PC-3 (cell line): ENCODE measurements at regions of chr18 and their contacts with region 1.

Region 1: GRCh38 chr18:45026162-45026561 is 345.5 kb downstream of the SETBP1 start:
- DNase-seq: no peak
- ATAC-seq: no peak
- H3K4me3 ChIP-seq: no peak overlapping the region
- H3K27ac ChIP-seq: no peak overlapping the region
- H3K4me1 ChIP-seq: no peaks in the 10 kb centered on the region
- H3K27me3 ChIP-seq: no peaks in the 10 kb centered on the region
- CTCF ChIP-seq: no peak

Region 2: DNA sequence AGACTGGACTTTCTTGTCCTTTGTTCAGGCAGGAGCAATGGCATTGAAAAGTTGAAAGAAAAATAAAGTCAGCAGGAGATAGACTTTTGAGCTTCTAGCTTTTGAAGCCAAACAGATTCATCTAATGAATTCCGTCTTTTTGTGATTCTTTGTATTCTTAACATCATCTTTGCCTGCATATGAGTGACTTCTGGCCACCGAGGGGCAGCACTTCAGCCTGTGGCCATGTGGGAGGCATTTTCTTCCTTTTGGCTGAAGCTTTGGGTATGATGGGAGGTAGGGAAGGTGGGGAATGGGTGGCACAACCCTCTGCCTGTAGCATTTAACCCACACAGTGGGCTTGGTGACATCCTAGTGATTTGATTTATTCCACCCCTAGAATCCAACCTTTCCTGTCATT is 124.9 kb before region 1 on chr18:
- CTCF ChIA-PET with region 1: no interaction called
- POLR2A ChIA-PET with region 1: no interaction called
- intact Hi-C with region 1: loop called (anchors 5 kb)
- DNase-seq: no peak
- ATAC-seq: no peak
- H3K4me3 ChIP-seq: no peak overlapping the region
- H3K27ac ChIP-seq: no peak overlapping the region
- H3K4me1 ChIP-seq: peaks cover 5% of the 10 kb centered on the region
- H3K27me3 ChIP-seq: no peaks in the 10 kb centered on the region
- CTCF ChIP-seq: peak; percentile 53